Sciatic nerve (tissue), 2 donors: ENCODE measurements at regions of chr3 and their contacts with region 1.

Region 1: GRCh38 chr3:128322066-128323022 is 144.3 kb downstream of the DNAJB8 start:
- DNase-seq: peak; percentile 74
- ATAC-seq: peak; percentile 60

Region 2: DNA sequence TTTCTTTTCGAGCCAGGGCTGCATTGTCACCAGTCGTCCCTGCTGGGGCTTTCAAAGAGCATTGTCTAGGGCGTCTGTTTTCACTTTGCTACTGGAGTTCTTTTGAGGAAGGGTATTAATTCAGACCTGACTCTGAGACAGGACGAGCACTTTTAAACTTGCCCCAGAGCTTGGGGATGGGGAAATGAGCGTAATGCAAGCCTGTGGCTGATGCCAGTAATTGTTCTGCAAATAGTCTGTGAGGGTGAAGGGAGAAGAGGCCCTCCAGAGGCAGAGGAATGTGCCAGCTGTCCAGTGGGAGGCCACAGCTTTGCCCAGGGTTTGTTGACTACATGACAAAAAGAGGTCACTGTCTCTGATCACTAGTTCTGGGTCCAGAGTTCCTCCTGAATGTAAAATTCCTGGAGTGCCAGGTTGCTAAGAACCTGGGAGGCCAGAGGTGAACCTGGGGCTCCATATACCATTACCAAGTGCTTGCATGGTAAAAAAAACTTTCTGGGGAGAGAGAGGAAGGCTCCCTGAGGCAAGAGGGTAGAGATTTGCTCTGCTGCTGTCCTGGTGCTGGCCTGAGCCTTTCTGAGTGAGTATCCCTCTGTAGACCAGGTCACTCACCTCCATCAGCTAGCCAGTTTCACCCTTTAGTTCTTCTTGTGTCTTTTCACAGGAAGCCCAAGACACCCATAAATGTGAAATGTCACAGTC is 154.2 kb before region 1 on chr3:
- intact Hi-C with region 1: loop called (anchors 10 kb)
- DNase-seq: no peak
- ATAC-seq: no peak